ENCODE measurements at regions of chrX and their contacts with region 1.

Region 1: GRCh38 chrX:19382555-19383145 is 38.9 kb downstream of the PDHA1 start:
- DNase-seq: peak; percentile 55 to 59
- ATAC-seq: peak; percentile 97 to 99
- H3K4me3 ChIP-seq: no peak overlapping the region
- H3K27ac ChIP-seq: no peak overlapping the region
- H3K4me1 ChIP-seq: no peaks in the 10 kb centered on the region
- CTCF ChIP-seq: peak; percentile 54
- EP300 ChIP-seq: no peak
- POLR2A ChIP-seq: no peak
- RAD21 ChIP-seq: peak; percentile 45 to 59; a peak in 4 of 5 replicates

Region 2: GRCh38 chrX:19280636-19281035 is 102.0 kb before region 1 on chrX:
- CTCF ChIA-PET with region 1: no interaction called
- POLR2A ChIA-PET with region 1: no interaction called
- DNase-seq: no peak
- ATAC-seq: no peak
- H3K4me3 ChIP-seq: no peak overlapping the region
- H3K27ac ChIP-seq: no peak overlapping the region
- H3K4me1 ChIP-seq: no peaks in the 10 kb centered on the region
- CTCF ChIP-seq: no peak
- EP300 ChIP-seq: no peak
- POLR2A ChIP-seq: no peak
- RAD21 ChIP-seq: no peak

Region 3: GRCh38 chrX:19515615-19516105 is 133.0 kb after region 1 on chrX:
- CTCF ChIA-PET with region 1: interaction called, 11 read pairs
- POLR2A ChIA-PET with region 1: no interaction called
- DNase-seq: peak; percentile 10 to 14
- ATAC-seq: peak; percentile 40 to 63; a peak in 5 of 6 replicates
- H3K4me3 ChIP-seq: peak overlapping the region; percentile 60
- H3K27ac ChIP-seq: peak overlapping the region; percentile 71 to 91; a peak in 5 of 6 replicates
- H3K4me1 ChIP-seq: peaks cover 7% of the 10 kb centered on the region; the same call in 1 of the 3 replicates
- CTCF ChIP-seq: no peak; the same call in 1 of the 3 replicates
- EP300 ChIP-seq: no peak
- POLR2A ChIP-seq: no peak
- RAD21 ChIP-seq: no peak; a peak in 1 of 5 replicates

Region 4: GRCh38 chrX:19544693-19545305 is 162.1 kb after region 1 on chrX:
- CTCF ChIA-PET with region 1: no interaction called
- POLR2A ChIA-PET with region 1: no interaction called
- DNase-seq: peak; percentile 64 to 66
- ATAC-seq: peak; percentile 80 to 93; a peak in 5 of 6 replicates
- H3K4me3 ChIP-seq: no peak overlapping the region
- H3K27ac ChIP-seq: no peak overlapping the region
- H3K4me1 ChIP-seq: no peaks in the 10 kb centered on the region
- CTCF ChIP-seq: peak; percentile 77
- EP300 ChIP-seq: no peak
- POLR2A ChIP-seq: no peak
- RAD21 ChIP-seq: peak; percentile 63 to 76

Region 5: GRCh38 chrX:19649226-19649995 is 266.8 kb after region 1 on chrX:
- CTCF ChIA-PET with region 1: no interaction called
- POLR2A ChIA-PET with region 1: no interaction called
- DNase-seq: no peak
- ATAC-seq: no peak
- H3K4me3 ChIP-seq: no peak overlapping the region
- H3K27ac ChIP-seq: no peak overlapping the region
- H3K4me1 ChIP-seq: peaks cover 27% of the 10 kb centered on the region; the same call in 2 of the 3 replicates
- CTCF ChIP-seq: no peak
- EP300 ChIP-seq: no peak
- POLR2A ChIP-seq: no peak
- RAD21 ChIP-seq: no peak

Measured in A549 (cell line).